ENCODE measurements at regions of chr17 and their contacts with region 1.

Region 1: DNA sequence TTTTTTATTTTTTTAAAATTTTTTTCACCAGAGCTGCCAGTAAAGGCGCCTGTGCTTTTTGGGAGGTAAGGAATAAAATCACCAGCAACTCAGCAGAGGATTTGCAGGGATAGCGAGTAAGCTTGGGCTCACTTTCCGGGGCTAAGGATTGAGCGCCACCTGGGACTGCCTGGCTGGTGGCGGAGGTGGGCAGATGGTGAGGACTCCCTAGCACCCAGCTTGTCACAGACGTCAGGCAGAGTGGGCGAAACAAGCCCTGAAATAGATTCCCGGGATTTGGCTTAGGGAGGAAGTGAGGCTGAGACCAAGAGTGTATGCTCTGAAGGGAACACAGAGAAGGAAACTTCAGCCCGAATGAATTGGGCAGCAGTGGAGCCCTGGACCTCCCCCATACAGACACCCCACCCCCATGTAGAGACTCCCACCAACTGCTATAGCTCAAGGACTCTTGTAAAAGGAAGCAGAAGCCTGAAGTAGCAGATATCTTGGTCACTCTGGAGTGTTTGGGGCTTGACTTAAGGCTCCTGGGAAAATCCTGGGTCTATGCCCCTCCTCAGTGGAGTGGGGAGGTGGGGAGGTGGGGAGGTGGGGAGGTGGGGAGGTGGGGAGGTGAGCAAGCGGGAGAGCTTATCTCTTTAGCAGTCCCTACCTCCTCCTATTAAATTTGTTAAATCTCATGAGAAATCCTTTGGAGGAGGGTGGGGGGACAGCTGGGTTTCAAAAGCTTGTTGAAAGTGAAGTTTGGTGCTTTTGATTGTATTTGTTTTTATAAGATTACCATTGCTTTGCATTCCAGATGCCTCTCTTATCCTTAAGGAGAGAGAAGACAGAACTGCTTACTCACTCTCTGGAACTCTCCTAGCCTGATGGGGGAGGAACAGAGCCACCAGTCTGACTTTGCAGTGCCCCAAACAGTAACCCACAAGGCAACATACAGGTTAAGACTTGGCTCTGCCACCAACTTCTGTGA is 8.2 kb downstream of the ARL4D start:
- DNase-seq: no peak
- H3K4me3 ChIP-seq: no peak overlapping the region
- H3K27me3 ChIP-seq: no peaks in the 10 kb centered on the region
- CTCF ChIP-seq: no peak

Region 2: DNA sequence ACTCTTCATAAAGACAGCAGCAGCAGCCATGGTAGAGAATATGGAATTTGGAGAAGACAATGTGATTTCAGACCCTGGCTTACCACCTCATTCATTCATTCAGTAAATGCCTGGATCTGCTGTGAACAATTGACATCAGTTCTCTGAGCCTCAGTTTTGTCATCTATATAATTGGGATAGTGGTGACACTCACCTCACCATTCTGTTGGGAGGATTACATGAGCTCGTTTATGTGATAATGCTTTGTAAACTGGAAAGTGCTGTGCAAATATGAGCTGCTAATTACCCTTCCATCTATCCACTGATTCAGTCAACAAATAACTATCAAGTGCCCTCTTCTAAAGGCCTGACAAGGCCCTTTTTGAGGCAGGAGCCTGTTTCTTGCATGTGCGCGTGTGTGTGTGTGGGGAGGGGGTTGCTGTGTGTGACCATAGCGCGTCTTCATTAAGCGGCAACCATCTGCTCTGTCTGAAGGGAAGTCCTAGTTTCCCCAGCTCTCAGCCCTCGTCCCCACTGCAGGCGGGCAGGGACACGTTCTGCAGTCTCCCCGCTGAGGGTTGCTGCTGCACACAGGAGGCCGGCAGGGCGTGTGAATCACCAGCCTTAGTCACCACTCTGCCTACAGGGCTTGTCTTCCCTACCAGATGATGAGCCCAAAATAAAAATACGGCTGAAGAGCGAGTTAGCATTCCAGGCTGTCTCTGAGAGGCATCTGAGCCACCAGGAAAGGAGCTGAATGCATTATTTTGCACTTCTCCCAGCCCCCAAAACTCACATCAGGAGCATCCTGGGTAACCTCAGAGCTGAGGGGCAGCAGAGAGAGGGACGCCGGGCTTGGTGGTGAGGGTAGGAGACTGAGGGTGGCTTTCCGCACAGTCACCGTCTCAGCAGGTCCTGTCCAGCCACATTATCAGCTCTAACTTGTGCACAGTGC is 11.7 kb after region 1 on chr17:
- CTCF ChIA-PET with region 1: interaction called, 5 read pairs
- POLR2A ChIA-PET with region 1: interaction called, 12 read pairs
- DNase-seq: peak; percentile 76
- H3K4me3 ChIP-seq: no peak overlapping the region
- H3K27me3 ChIP-seq: no peaks in the 10 kb centered on the region
- CTCF ChIP-seq: no peak; the same call in 1 of the 2 replicates

Region 3: GRCh38 chr17:43530278-43531081 is 123.5 kb after region 1 on chr17:
- CTCF ChIA-PET with region 1: no interaction called
- POLR2A ChIA-PET with region 1: no interaction called
- DNase-seq: no peak
- H3K4me3 ChIP-seq: no peak overlapping the region
- H3K27me3 ChIP-seq: no peaks in the 10 kb centered on the region
- CTCF ChIP-seq: no peak